Endothelial cell of umbilical vein (primary cell): ENCODE measurements at regions of chr13 and their contacts with region 1.

Region 1: DNA sequence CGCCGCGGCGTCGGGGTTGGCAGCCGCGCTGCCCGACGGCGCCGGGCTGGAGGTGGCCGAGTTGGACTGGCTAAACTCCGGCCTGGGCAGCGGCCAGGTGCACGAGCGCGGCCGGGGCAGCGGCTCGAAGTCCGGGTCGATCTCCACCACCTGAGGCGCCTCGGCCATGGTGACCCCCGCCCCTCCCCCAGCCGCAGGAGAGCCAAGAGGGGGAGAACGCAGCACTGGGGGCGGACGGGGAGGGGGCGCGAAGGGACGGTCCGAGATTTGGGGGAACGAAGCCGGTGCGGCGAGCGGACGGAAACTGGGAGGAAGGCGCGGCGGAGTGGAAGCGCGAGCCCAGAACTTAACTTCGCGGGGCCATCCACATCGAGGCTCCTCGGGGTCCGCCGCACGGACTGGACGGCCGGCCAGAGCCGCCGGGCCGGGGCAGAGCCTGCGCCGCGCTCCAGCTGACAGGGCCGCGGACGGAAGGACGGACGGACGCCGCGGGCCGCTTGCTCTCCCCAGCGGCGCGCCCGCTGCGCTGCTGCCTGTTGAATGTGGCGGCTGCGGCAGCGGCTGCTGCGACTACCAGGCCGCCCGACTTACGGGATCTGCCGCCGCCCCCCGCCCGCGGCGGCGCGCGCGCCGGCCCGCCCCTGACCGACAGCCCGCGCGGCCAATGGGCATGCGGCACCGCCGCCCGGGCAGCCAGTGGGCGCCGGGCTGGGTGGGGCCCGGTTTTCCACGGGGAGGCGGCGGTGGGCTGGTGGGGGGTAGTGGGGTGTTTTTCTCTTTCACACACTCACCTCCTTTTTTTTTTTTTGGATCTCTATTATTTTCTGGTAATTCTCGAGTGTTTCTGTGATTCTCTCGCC is at the start of gene FOXO1:
- DNase-seq: peak; percentile 79
- H3K4me3 ChIP-seq: peak within 1 kb of the TSS; percentile 67 to 95 (median 86)
- H3K27ac ChIP-seq: peak within 1 kb of the TSS; percentile 81
- H3K4me1 ChIP-seq: peaks cover 24% of the 10 kb centered on the region
- H3K27me3 ChIP-seq: no peaks in the 10 kb centered on the region
- CTCF ChIP-seq: no peak
- POLR2A ChIP-seq: peak; percentile 97
- total RNA-seq, gene FOXO1: 47.6 and 48.5 TPM in 2 replicates

Region 2: DNA sequence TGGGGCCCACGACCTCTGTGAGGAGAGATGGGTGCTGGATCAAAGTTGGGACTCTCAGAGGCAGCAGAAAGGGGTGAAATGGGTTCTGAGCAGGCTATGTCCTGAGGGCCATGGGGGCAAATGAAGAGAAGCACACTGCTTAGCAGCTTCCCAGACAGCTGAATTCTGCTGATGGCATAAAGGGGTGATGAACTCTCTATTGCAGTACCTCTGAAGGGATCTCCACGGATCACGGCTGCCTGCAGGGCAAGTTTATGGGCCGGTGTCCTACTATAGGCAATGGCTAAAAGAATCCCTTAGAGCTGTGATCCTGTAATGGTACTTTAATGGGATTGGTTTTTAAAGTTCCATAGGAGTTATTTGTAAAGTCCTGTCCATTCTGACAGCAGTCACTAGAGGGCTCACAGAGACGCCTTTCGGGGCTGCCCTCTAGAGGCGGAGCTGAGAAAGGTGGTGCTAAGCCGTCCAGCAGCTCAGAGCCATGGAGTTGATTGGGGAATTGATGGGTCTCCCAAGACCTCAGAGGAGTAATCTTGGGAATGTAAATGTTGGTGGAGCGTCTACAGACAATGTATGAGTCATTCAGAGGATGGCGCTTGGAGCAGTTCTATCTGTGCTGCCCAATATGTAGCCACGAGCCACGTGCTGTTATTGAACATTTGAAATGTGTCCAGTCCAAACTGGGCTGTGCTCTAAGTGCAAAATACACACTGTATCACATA is 723.6 kb before region 1 on chr13:
- CTCF ChIA-PET with region 1: interaction called, 6 read pairs
- POLR2A ChIA-PET with region 1: no interaction called
- dilution Hi-C with region 1: no loop called
- intact Hi-C with region 1: loop called (anchors 2 kb)
- DNase-seq: peak; percentile 71
- H3K4me3 ChIP-seq: no peak overlapping the region
- H3K27ac ChIP-seq: no peak overlapping the region
- H3K4me1 ChIP-seq: peaks cover 3% of the 10 kb centered on the region
- H3K27me3 ChIP-seq: no peaks in the 10 kb centered on the region
- CTCF ChIP-seq: peak; percentile 86 to 94
- POLR2A ChIP-seq: no peak

Region 3: GRCh38 chr13:40401911-40402776 is 264.1 kb before region 1 on chr13:
- CTCF ChIA-PET with region 1: no interaction called
- POLR2A ChIA-PET with region 1: no interaction called
- dilution Hi-C with region 1: no loop called
- intact Hi-C with region 1: loop called (anchors 1 kb)
- DNase-seq: peak; percentile 93
- H3K4me3 ChIP-seq: no peak overlapping the region
- H3K27ac ChIP-seq: peak overlapping the region; percentile 61
- H3K4me1 ChIP-seq: peaks cover 31% of the 10 kb centered on the region
- H3K27me3 ChIP-seq: no peaks in the 10 kb centered on the region
- CTCF ChIP-seq: no peak
- POLR2A ChIP-seq: no peak

Region 4: DNA sequence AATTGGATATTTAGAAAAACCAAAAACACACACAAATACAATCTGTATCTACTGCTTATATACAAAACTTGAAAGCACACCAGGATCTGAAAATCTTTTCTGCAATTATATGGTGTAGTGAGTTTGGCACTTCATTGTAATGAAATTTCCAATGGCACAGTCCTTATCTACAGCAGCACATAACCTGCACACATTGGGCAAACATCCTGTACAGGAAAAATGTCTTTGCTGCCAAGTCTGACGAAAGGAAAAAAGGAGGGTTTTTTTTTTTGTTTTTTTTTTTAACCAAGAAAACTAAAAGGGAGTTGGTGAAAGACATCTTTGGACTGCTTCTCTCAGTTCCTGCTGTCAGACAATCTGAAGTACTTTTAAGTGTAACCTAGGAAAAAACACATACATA is 107.6 kb before region 1 on chr13:
- CTCF ChIA-PET with region 1: interaction called, 5 read pairs
- POLR2A ChIA-PET with region 1: interaction called, 6 read pairs
- dilution Hi-C with region 1: no loop called
- intact Hi-C with region 1: loop called (anchors 2 kb)
- DNase-seq: peak; percentile 95
- H3K4me3 ChIP-seq: peak overlapping the region in 1 of 3 experiments; percentile 1
- H3K27ac ChIP-seq: peak overlapping the region; percentile 61
- H3K4me1 ChIP-seq: peaks cover 56% of the 10 kb centered on the region
- H3K27me3 ChIP-seq: no peaks in the 10 kb centered on the region
- CTCF ChIP-seq: no peak
- POLR2A ChIP-seq: peak; percentile 35

Region 5: GRCh38 chr13:40613192-40613818 is 53.0 kb before region 1 on chr13:
- CTCF ChIA-PET with region 1: interaction called, 3 read pairs
- POLR2A ChIA-PET with region 1: no interaction called
- dilution Hi-C with region 1: no loop called
- intact Hi-C with region 1: loop called (anchors 1 kb)
- DNase-seq: peak; percentile 70
- H3K4me3 ChIP-seq: no peak overlapping the region
- H3K27ac ChIP-seq: peak overlapping the region; percentile 98
- H3K4me1 ChIP-seq: peaks cover 75% of the 10 kb centered on the region
- H3K27me3 ChIP-seq: no peaks in the 10 kb centered on the region
- CTCF ChIP-seq: no peak
- POLR2A ChIP-seq: no peak